ENCODE measurements at regions of chr1 and their contacts with region 1.

Region 1: GRCh38 chr1:226109829-226110248 is 47.3 kb downstream of the H3-3A start:
- DNase-seq: peak; percentile 83 to 87
- H3K4me3 ChIP-seq: peak overlapping the region; percentile 67 to 86 (median 74)
- H3K27ac ChIP-seq: peak overlapping the region; percentile 96 to 97
- H3K4me1 ChIP-seq: peaks cover 0 to 4% of the 10 kb centered on the region in 2 donors
- H3K27me3 ChIP-seq: no peaks in the 10 kb centered on the region
- CTCF ChIP-seq: no peak
- POLR2A ChIP-seq: no peak

Region 2: GRCh38 chr1:226097866-226098625 is 11.8 kb before region 1 on chr1:
- intact Hi-C with region 1: no loop called
- DNase-seq: no peak
- H3K4me3 ChIP-seq: no peak overlapping the region
- H3K27ac ChIP-seq: no peak overlapping the region
- H3K4me1 ChIP-seq: no peaks in the 10 kb centered on the region
- H3K27me3 ChIP-seq: no peaks in the 10 kb centered on the region
- CTCF ChIP-seq: no peak
- POLR2A ChIP-seq: no peak

Region 3: GRCh38 chr1:226186124-226187018 is 76.5 kb after region 1 on chr1 and contains the start of gene ACBD3:
- intact Hi-C with region 1: loop called (anchors 10 kb)
- DNase-seq: peak; percentile 82 to 86
- H3K4me3 ChIP-seq: peak within 1 kb of the TSS; percentile 84 to 92 (median 89)
- H3K27ac ChIP-seq: peak within 1 kb of the TSS; percentile 97 to 98
- H3K4me1 ChIP-seq: peaks cover 0 to 6% of the 10 kb centered on the region in 2 donors
- H3K27me3 ChIP-seq: no peaks in the 10 kb centered on the region
- CTCF ChIP-seq: no peak
- POLR2A ChIP-seq: peak; percentile 88
- total RNA-seq, gene ACBD3: 52.4 to 63.9 (median 54.4) TPM

Region 4: DNA sequence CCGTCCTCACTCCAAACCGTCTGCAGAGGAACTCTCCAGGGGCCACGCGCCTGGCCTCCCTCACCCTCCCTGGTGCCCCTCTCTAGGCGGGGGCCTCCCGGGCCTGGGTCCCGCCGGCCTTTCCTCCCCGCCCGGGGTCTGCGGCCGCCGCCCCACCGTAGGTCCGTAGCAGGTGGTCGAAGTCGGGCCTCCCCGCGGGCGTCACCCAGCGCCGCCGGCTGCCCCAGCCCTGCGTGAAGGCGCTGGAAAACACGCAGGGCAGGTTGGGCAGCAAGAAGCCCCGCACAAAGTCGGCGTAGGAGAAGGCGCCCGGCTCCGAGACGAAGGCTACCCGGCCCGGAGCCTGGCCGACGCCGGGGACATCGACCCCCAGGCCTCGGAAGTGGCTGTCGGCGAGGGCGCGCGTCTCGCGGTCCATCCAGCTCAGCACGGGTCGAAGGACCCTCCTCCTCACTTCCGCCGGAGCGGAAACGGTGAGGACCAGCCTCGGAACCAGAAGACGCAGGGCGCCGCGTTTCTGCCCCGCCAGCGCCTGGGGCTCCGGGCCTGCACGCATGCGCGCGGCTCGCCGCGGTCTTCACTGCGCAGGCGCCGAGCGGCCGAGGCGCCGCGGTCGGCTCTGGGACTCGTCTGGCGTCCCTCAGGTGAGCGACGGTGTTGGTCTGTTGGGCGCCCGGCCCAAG is 1625.2 kb after region 1 on chr1 and contains the starts of genes JMJD4 and SNAP47:
- intact Hi-C with region 1: no loop called
- DNase-seq: peak; percentile 84 to 90
- H3K4me3 ChIP-seq: peak within 1 kb of the TSS; percentile 76 to 87 (median 76)
- H3K27ac ChIP-seq: peak within 1 kb of the TSS; percentile 80 to 91
- H3K4me1 ChIP-seq: peaks cover 0 to 19% of the 10 kb centered on the region in 2 donors
- H3K27me3 ChIP-seq: no peaks in the 10 kb centered on the region
- CTCF ChIP-seq: no peak
- POLR2A ChIP-seq: peak; percentile 75
- total RNA-seq, gene JMJD4: 11.7 to 27.2 (median 21.0) TPM
- total RNA-seq, gene SNAP47: 28.3 to 60.3 (median 52.1) TPM